CD8-positive, alpha-beta T cell (primary cell): ENCODE measurements at regions of chr11 and their contacts with region 1.

Region 1: DNA sequence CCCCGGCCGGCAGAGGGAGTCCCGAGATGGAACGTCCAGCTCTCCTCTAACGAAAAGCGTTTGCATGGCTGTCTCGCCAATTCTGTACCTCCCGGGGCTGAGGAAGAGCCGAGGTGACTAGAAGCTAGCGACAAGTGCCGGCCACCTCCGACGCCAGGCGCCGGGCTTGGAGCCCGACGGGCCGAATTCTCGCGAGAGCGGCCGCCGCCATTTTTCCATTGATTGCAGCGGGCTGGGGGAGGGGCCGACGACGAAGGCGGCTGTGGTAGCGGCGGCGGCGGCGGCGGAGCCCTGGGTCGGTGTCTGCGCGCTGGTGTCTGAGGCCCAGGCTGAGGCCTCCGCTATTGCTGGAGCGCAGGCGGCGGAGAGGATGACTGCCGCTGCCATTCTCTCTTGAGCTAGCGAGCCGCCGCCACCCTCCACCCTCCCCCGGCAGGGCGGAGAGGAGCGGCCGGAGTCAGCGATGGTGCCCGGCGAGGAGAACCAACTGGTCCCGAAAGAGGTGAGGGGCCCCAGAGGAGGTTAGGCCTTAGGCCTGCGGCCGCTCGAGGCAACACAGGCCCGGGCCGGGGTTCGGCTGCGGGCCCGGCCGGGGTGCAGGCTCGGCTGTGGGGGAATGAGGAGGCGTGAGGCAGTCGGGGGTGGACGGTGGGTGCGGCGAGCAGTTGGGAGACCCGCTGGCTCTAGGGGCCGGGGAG is at the start of gene USP47:
- DNase-seq: peak; percentile 90 to 98 (median 94)
- ATAC-seq: peak; percentile 79
- H3K4me3 ChIP-seq: peak within 1 kb of the TSS; percentile 77 to 92
- H3K4me3 Mint-ChIP-seq: no peak within 1 kb of the TSS
- H3K27ac ChIP-seq: peak within 1 kb of the TSS; percentile 92 to 95
- H3K27ac Mint-ChIP-seq: no peak within 1 kb of the TSS
- H3K4me1 ChIP-seq: peaks cover 37% of the 10 kb centered on the region
- H3K4me1 Mint-ChIP-seq: peaks cover 26% of the 10 kb centered on the region
- H3K27me3 ChIP-seq: no peaks in the 10 kb centered on the region
- H3K27me3 Mint-ChIP-seq: peaks cover 6% of the 10 kb centered on the region
- CTCF ChIP-seq: peak; percentile 46
- total RNA-seq, gene USP47: 93.4 to 100 TPM

Region 2: GRCh38 chr11:10857709-10858438 is 984.0 kb before region 1 on chr11 and contains the start of gene ZBED5:
- CTCF ChIA-PET with region 1: no interaction called
- POLR2A ChIA-PET with region 1: no interaction called
- intact Hi-C with region 1: loop called (anchors 1 to 5 kb)
- DNase-seq: peak; percentile 91 to 98 (median 94)
- ATAC-seq: peak; percentile 90
- H3K4me3 ChIP-seq: peak within 1 kb of the TSS; percentile 68 to 93
- H3K4me3 Mint-ChIP-seq: peak within 1 kb of the TSS; percentile 98
- H3K27ac ChIP-seq: peak within 1 kb of the TSS; percentile 91 to 92
- H3K27ac Mint-ChIP-seq: peak within 1 kb of the TSS; percentile 99
- H3K4me1 ChIP-seq: peaks cover 23% of the 10 kb centered on the region
- H3K4me1 Mint-ChIP-seq: peaks cover 51% of the 10 kb centered on the region
- H3K27me3 ChIP-seq: no peaks in the 10 kb centered on the region
- H3K27me3 Mint-ChIP-seq: no peaks in the 10 kb centered on the region
- CTCF ChIP-seq: no peak
- total RNA-seq, gene ZBED5: 57.5 to 59.2 TPM

Region 3: GRCh38 chr11:11856638-11857037 is 14.8 kb after region 1 on chr11:
- CTCF ChIA-PET with region 1: interaction called, 7 read pairs
- POLR2A ChIA-PET with region 1: interaction called, 26 read pairs
- intact Hi-C with region 1: loop called in 1 of 2 experiments (anchors 2 kb)
- DNase-seq: peak in 3 of 9 experiments; percentile 33 to 78 (median 56)
- ATAC-seq: peak; percentile 82
- H3K4me3 ChIP-seq: no peak overlapping the region
- H3K4me3 Mint-ChIP-seq: peak overlapping the region; percentile 58
- H3K27ac ChIP-seq: peak overlapping the region in 1 of 2 experiments; percentile 51
- H3K27ac Mint-ChIP-seq: peak overlapping the region; percentile 65
- H3K4me1 ChIP-seq: peaks cover 45% of the 10 kb centered on the region
- H3K4me1 Mint-ChIP-seq: peaks cover 81% of the 10 kb centered on the region
- H3K27me3 ChIP-seq: no peaks in the 10 kb centered on the region
- H3K27me3 Mint-ChIP-seq: no peaks in the 10 kb centered on the region
- CTCF ChIP-seq: no peak

Region 4: GRCh38 chr11:11913395-11913794 is 71.5 kb after region 1 on chr11:
- CTCF ChIA-PET with region 1: no interaction called
- POLR2A ChIA-PET with region 1: no interaction called
- intact Hi-C with region 1: no loop called
- DNase-seq: no peak
- ATAC-seq: no peak
- H3K4me3 ChIP-seq: no peak overlapping the region
- H3K4me3 Mint-ChIP-seq: no peak overlapping the region
- H3K27ac ChIP-seq: no peak overlapping the region
- H3K27ac Mint-ChIP-seq: no peak overlapping the region
- H3K4me1 ChIP-seq: no peaks in the 10 kb centered on the region
- H3K4me1 Mint-ChIP-seq: no peaks in the 10 kb centered on the region
- H3K27me3 ChIP-seq: no peaks in the 10 kb centered on the region
- H3K27me3 Mint-ChIP-seq: no peaks in the 10 kb centered on the region
- CTCF ChIP-seq: no peak

Region 5: GRCh38 chr11:12110201-12110713 is 268.4 kb after region 1 on chr11 and contains the start of gene MICAL2:
- CTCF ChIA-PET with region 1: no interaction called
- POLR2A ChIA-PET with region 1: no interaction called
- intact Hi-C with region 1: loop called (anchors 5 kb)
- DNase-seq: peak; percentile 61 to 92 (median 79)
- ATAC-seq: peak; percentile 94
- H3K4me3 ChIP-seq: peak within 1 kb of the TSS; percentile 44 to 56
- H3K4me3 Mint-ChIP-seq: peak within 1 kb of the TSS; percentile 83
- H3K27ac ChIP-seq: peak within 1 kb of the TSS in 1 of 2 experiments; percentile 5
- H3K27ac Mint-ChIP-seq: peak within 1 kb of the TSS; percentile 70
- H3K4me1 ChIP-seq: peaks cover 13% of the 10 kb centered on the region
- H3K4me1 Mint-ChIP-seq: peaks cover 17% of the 10 kb centered on the region
- H3K27me3 ChIP-seq: no peaks in the 10 kb centered on the region
- H3K27me3 Mint-ChIP-seq: no peaks in the 10 kb centered on the region
- CTCF ChIP-seq: no peak
- total RNA-seq, gene MICAL2: 15.8 TPM

Region 6: DNA sequence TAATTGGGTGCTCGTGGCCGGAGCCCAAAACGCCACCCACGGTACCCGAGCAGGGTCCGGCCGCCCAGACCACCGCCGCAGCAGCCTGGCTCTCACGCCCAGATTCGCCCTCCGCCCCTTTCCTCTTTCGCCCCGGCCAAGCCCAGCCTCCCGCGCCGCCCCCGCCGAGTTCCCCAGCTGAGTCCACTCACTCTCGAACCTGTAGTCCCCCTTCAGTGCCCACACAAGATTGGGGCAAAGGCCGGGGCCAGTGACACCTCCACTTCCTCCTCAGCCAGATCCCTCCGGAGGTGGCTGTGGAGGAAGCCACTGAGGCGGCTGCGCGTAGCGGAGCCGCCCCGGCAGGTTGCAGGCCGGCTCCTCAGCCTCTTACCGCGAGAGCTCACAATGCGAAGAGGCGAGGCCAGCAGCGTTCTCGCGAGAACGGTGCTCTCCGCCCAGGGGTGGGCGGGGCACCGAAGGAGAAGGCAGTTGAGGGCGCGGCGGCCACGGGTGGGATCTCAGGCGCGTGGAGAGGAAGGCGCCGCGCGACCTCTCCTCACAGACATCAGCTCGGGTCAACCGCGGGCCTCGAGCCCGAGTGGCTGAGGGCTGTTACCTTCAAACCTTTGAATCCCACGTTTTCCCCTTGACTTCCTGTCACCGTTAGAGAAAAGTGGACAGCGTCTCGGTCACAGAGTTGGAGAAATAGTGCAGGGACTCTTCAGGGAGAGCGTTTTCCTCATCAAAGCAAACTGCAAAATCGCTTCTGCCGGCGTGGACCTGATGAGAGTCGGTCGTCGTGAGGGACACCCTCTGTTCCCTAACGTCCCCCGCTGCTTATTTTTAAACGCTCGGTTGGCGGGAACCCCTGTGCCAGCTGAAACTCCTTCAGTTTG is 1621.3 kb after region 1 on chr11 and contains the start of gene BTBD10:
- CTCF ChIA-PET with region 1: no interaction called
- POLR2A ChIA-PET with region 1: interaction called, 3 read pairs
- intact Hi-C with region 1: loop called in 1 of 2 experiments (anchors 5 kb)
- DNase-seq: peak; percentile 81 to 98 (median 90)
- ATAC-seq: peak; percentile 98
- H3K4me3 ChIP-seq: peak within 1 kb of the TSS; percentile 69 to 92
- H3K4me3 Mint-ChIP-seq: peak within 1 kb of the TSS; percentile 98
- H3K27ac ChIP-seq: peak within 1 kb of the TSS; percentile 87 to 92
- H3K27ac Mint-ChIP-seq: peak within 1 kb of the TSS; percentile 96
- H3K4me1 ChIP-seq: peaks cover 18% of the 10 kb centered on the region
- H3K4me1 Mint-ChIP-seq: peaks cover 49% of the 10 kb centered on the region
- H3K27me3 ChIP-seq: no peaks in the 10 kb centered on the region
- H3K27me3 Mint-ChIP-seq: no peaks in the 10 kb centered on the region
- CTCF ChIP-seq: no peak
- total RNA-seq, gene BTBD10: 17.0 to 19.2 TPM